Activated T-helper 1 cell treated with anti-CD3 and anti-CD28 coated beads, Interleukin-12 subunit alpha, Interleukin-12 subunit beta, Interleukin-2, Interleukin-4 antibody, amounts not matched to agents 30 ng/mL and 10 ng/mL and 1 ng/mL, durations not matched to agents 14 hours and 24 hours and 36 hours (primary cell): ENCODE measurements at regions of chr3 and their contacts with region 1.

Region 1: GRCh38 chr3:171284308-171285075 is 175.7 kb downstream of the TNIK start:
- DNase-seq: no peak
- H3K4me3 Mint-ChIP-seq: no peak overlapping the region
- H3K27ac Mint-ChIP-seq: peak overlapping the region; percentile 52
- H3K4me1 Mint-ChIP-seq: peaks cover 71% of the 10 kb centered on the region
- H3K27me3 Mint-ChIP-seq: no peaks in the 10 kb centered on the region

Region 2: GRCh38 chr3:171187706-171188290 is 96.7 kb before region 1 on chr3:
- intact Hi-C with region 1: loop called (anchors 1 kb)
- DNase-seq: no peak
- H3K4me3 Mint-ChIP-seq: no peak overlapping the region
- H3K27ac Mint-ChIP-seq: no peak overlapping the region
- H3K4me1 Mint-ChIP-seq: peaks cover 56% of the 10 kb centered on the region
- H3K27me3 Mint-ChIP-seq: no peaks in the 10 kb centered on the region

Region 3: GRCh38 chr3:171248425-171249111 is 35.9 kb before region 1 on chr3:
- intact Hi-C with region 1: loop called (anchors 1 kb)
- DNase-seq: no peak
- H3K4me3 Mint-ChIP-seq: no peak overlapping the region
- H3K27ac Mint-ChIP-seq: no peak overlapping the region
- H3K4me1 Mint-ChIP-seq: peaks cover 16% of the 10 kb centered on the region
- H3K27me3 Mint-ChIP-seq: no peaks in the 10 kb centered on the region

Region 4: GRCh38 chr3:171269542-171269941 is 14.9 kb before region 1 on chr3:
- intact Hi-C with region 1: loop called (anchors 1 kb)
- DNase-seq: no peak
- H3K4me3 Mint-ChIP-seq: no peak overlapping the region
- H3K27ac Mint-ChIP-seq: peak overlapping the region; percentile 31
- H3K4me1 Mint-ChIP-seq: peaks cover 76% of the 10 kb centered on the region
- H3K27me3 Mint-ChIP-seq: no peaks in the 10 kb centered on the region

Region 5: DNA sequence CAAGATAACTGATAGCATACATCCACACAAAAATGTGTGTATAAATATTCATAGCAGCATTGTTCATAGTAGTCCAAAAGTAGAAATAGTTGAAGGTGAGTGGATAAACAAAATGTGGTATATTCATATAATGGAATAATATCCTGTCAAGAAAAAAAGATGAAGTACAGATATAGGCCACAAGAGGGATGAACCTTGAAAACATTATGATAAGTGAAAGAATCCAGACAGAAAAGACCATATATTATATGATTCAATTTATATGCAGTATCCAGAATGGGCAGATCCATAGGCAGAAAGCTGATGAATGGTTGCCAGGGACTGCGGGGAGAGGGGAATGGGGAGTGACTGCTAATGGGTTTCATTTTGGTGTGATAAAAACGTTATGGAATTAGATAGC is 230.0 kb after region 1 on chr3:
- intact Hi-C with region 1: no loop called
- DNase-seq: no peak
- H3K4me3 Mint-ChIP-seq: no peak overlapping the region
- H3K27ac Mint-ChIP-seq: no peak overlapping the region
- H3K4me1 Mint-ChIP-seq: no peaks in the 10 kb centered on the region
- H3K27me3 Mint-ChIP-seq: peaks cover 14% of the 10 kb centered on the region

Region 6: GRCh38 chr3:171561596-171562323 is 277.3 kb after region 1 on chr3:
- intact Hi-C with region 1: loop called (anchors 2 kb)
- DNase-seq: no peak
- H3K4me3 Mint-ChIP-seq: peak overlapping the region; percentile 50
- H3K27ac Mint-ChIP-seq: peak overlapping the region; percentile 92
- H3K4me1 Mint-ChIP-seq: peaks cover 66% of the 10 kb centered on the region
- H3K27me3 Mint-ChIP-seq: no peaks in the 10 kb centered on the region